HAP-1 (cell line): ENCODE measurements at regions of chr6 and their contacts with region 1.

Region 1: DNA sequence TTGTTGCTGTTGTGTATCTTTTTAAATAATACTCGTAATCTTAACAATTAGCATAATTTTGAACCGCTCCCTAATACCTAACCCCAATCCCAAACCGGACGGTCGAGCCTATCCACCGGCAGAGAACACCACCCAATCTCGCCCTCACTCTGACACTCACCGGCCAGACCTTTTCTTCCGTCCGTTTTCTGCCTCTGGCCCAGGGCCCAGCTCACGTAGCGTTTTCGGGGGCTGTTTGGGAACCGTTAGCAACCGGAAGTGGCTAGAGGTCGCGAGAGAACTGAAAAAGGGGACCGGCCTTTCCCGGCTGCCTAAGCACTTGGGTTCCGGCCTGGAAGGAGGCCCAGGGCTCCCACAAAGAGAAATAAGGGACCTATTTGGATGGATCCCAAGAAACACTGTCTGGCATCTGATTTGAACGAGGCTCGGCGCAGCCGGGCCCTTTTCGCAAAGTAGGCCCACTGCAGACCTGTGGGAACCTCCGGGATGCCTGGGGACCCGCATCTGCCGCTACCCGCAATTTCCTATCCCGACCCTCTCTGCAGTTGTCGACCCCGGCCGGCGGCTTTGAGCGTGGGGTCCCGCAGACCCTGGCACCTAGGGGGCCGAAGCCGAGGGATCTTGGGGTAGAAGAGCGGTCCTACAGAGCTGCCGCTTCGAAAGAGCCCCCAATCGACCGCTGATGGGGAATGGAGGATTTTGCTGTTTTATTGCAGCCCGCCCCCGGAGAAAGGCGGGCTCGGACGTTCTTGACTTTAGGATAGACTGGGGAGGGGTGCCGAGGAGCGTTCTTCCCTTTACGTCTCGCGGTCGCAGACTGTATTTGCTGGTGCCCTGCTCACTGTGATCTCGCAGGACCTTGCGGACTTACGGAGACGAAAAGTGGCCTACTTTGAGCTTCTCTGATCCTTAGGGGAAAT is 4.8 kb upstream of the ZKSCAN8 start:
- DNase-seq: peak; percentile 90 to 93
- H3K4me3 ChIP-seq: peak overlapping the region; percentile 58
- H3K4me1 ChIP-seq: peaks cover 15% of the 10 kb centered on the region
- H3K27me3 ChIP-seq: no peaks in the 10 kb centered on the region

Region 2: GRCh38 chr6:28266962-28267694 is 130.3 kb after region 1 on chr6 and contains the start of gene ZSCAN26:
- in situ Hi-C with region 1: loop called (anchors 25 kb)
- DNase-seq: peak; percentile 64 to 88
- H3K4me3 ChIP-seq: peak within 1 kb of the TSS; percentile 84
- H3K4me1 ChIP-seq: peaks cover 8% of the 10 kb centered on the region
- H3K27me3 ChIP-seq: peaks cover 3% of the 10 kb centered on the region; the same call in 1 of the 2 replicates

Region 3: DNA sequence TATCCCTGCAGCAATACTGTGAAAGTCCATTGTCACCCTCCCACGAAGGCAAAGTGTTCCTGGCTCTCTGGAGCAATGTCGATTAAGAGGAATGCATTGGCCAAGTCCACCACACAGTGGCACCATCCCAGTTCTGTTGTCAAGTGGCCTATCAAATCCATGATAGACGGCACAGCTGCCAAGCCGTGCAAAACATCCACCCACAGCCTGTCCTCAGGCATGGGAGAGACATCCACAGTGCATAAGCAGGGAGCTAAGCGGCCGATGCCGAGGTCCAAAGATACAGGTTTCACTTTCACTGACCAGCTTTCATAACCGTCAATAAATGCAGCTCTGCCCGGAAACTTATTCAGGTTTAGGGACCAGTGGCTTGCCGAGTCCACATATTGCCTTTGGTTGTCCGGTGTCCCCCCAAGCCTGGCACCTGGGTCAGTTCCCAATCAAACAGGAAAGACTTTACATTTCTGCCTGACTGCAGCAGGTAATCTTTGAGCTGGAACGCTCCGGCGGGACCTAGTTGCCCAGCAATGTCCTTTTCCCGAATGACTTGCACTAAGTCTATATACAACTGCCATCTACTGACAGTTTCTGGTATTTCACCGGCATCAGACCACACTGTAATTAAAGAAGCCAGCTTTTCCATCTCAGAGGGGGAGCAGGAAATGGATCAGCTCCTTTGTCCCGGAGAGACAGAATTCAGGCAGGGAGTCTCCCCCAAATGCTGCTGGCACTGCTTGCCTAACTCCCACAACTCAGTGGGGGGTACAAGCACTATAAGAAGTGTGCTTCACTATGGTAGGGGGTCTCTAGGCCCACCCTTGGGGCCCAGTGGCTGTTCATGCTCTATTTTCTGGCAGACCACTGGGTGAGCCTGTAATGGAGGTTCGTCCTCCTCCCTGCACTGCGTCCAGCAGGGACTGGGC is 219.2 kb after region 1 on chr6:
- in situ Hi-C with region 1: loop called (anchors 10 kb)
- DNase-seq: peak; percentile 79 to 83
- H3K4me3 ChIP-seq: peak overlapping the region; percentile 32
- H3K4me1 ChIP-seq: peaks cover 5% of the 10 kb centered on the region; the same call in 1 of the 2 replicates
- H3K27me3 ChIP-seq: no peaks in the 10 kb centered on the region